ENCODE measurements at regions of chr3 and their contacts with region 1.

Region 1: DNA sequence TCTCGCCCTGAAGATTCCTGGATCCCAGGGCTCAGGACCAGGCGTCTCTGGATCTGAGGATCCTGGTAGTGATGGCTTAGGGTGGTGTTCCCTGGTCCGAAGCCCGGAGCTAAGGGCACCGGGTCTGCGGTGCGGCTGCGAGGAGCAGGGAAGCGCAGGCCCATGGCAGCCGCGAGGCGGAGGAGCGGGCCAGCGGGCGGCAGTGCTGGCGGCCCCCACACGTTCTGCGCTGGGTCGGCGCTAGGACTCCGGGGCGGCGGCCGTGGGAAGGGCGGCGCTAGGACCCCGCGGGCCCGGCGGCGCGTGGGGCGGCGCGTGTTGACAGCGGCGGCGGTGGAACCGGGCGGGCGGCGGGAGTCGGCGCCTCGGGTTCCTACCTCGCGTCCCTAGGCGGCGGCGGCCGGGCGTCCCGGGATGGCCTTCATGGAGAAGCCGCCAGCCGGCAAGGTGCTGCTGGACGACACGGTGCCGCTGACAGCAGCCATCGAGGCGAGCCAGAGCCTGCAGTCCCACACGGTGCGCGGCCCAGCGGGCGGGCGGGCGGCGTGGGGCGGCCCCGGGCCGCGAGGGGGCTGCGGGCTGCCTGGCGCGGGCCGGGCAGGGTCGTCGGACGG is at the start of gene PXK:
- DNase-seq: peak; percentile 84
- ATAC-seq: peak; percentile 74
- H3K4me3 Mint-ChIP-seq: peak within 1 kb of the TSS; percentile 100
- H3K27ac Mint-ChIP-seq: peak within 1 kb of the TSS; percentile 99
- H3K4me1 Mint-ChIP-seq: peaks cover 49% of the 10 kb centered on the region
- H3K27me3 Mint-ChIP-seq: no peaks in the 10 kb centered on the region
- CTCF ChIP-seq: no peak
- total RNA-seq, gene PXK: 70.3 and 81.3 TPM in 2 replicates

Region 2: GRCh38 chr3:58200846-58201355 is 131.8 kb before region 1 on chr3:
- CTCF ChIA-PET with region 1: interaction called, 3 read pairs
- POLR2A ChIA-PET with region 1: interaction called, 12 read pairs
- intact Hi-C with region 1: no loop called
- DNase-seq: no peak
- ATAC-seq: no peak
- H3K4me3 Mint-ChIP-seq: peak overlapping the region; percentile 64
- H3K27ac Mint-ChIP-seq: peak overlapping the region; percentile 70
- H3K4me1 Mint-ChIP-seq: peaks cover 66% of the 10 kb centered on the region
- H3K27me3 Mint-ChIP-seq: no peaks in the 10 kb centered on the region
- CTCF ChIP-seq: no peak

Region 3: DNA sequence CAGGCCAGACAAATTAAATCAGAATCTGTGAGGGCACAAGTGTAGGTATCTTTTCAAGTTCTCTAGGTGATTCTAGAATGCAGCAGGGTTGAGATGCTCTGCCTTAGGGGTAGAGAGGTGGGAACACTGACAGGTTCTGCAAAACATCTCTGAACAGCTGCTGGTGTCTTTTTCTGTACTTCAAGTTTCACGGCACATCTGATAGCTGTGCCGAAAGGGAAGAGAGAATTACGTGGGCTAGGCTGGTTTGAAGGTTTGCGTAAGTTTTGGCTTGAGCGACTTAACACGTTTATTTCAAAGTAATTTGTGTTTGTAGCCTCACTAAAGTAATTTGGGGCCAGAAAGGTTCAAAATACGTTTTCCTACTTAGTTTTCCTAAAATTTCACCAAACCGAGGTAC is 22.5 kb after region 1 on chr3:
- CTCF ChIA-PET with region 1: interaction called, 125 read pairs
- POLR2A ChIA-PET with region 1: interaction called, 565 read pairs
- intact Hi-C with region 1: loop called (anchors 1 kb)
- DNase-seq: no peak
- ATAC-seq: peak; percentile 54
- H3K4me3 Mint-ChIP-seq: peak overlapping the region; percentile 73
- H3K27ac Mint-ChIP-seq: peak overlapping the region; percentile 100
- H3K4me1 Mint-ChIP-seq: peaks cover 90% of the 10 kb centered on the region
- H3K27me3 Mint-ChIP-seq: no peaks in the 10 kb centered on the region
- CTCF ChIP-seq: no peak

Region 4: GRCh38 chr3:58383904-58384303 is 51.2 kb after region 1 on chr3:
- CTCF ChIA-PET with region 1: interaction called, 7 read pairs
- POLR2A ChIA-PET with region 1: interaction called, 5 read pairs
- intact Hi-C with region 1: loop called (anchors 2 kb)
- DNase-seq: no peak
- ATAC-seq: no peak
- H3K4me3 Mint-ChIP-seq: no peak overlapping the region
- H3K27ac Mint-ChIP-seq: no peak overlapping the region
- H3K4me1 Mint-ChIP-seq: peaks cover 54% of the 10 kb centered on the region
- H3K27me3 Mint-ChIP-seq: no peaks in the 10 kb centered on the region
- CTCF ChIP-seq: no peak

Region 5: GRCh38 chr3:58414538-58415197 is 82.0 kb after region 1 on chr3:
- CTCF ChIA-PET with region 1: interaction called, 66 read pairs
- POLR2A ChIA-PET with region 1: interaction called, 12 read pairs
- intact Hi-C with region 1: loop called (anchors 1 kb)
- DNase-seq: no peak
- ATAC-seq: peak; percentile 81
- H3K4me3 Mint-ChIP-seq: no peak overlapping the region
- H3K27ac Mint-ChIP-seq: no peak overlapping the region
- H3K4me1 Mint-ChIP-seq: peaks cover 48% of the 10 kb centered on the region
- H3K27me3 Mint-ChIP-seq: no peaks in the 10 kb centered on the region
- CTCF ChIP-seq: peak; percentile 55

Region 6: GRCh38 chr3:58507356-58508078 is 174.8 kb after region 1 on chr3:
- CTCF ChIA-PET with region 1: no interaction called
- POLR2A ChIA-PET with region 1: no interaction called
- intact Hi-C with region 1: no loop called
- DNase-seq: no peak
- ATAC-seq: no peak
- H3K4me3 Mint-ChIP-seq: no peak overlapping the region
- H3K27ac Mint-ChIP-seq: no peak overlapping the region
- H3K4me1 Mint-ChIP-seq: peaks cover 3% of the 10 kb centered on the region
- H3K27me3 Mint-ChIP-seq: no peaks in the 10 kb centered on the region
- CTCF ChIP-seq: no peak